Posterior vena cava (tissue), 2 donors: ENCODE measurements at regions of chrX and their contacts with region 1.

Region 1: DNA sequence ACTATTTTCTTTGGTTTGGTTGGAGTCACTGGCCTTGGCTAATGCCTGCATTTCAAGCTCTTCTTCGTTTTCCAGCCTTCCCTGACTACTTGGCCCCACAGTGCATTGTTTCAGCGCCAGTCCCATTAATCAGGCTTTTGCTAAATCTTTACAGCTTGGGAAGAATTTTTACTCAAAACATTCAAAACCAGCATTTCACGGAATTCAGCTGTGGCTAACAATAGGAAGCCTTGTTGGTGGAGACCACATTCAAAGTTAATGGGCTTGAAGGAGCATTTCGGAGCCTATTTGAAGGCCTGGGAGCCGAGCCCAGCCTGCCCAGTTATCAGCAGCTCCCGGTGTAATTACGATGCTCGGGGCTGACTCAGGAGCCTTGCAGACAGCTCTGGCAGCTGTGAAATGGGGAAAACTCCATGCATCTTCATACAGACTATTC is 30.8 kb upstream of the VCX2 start:
- DNase-seq: peak; percentile 81

Region 2: DNA sequence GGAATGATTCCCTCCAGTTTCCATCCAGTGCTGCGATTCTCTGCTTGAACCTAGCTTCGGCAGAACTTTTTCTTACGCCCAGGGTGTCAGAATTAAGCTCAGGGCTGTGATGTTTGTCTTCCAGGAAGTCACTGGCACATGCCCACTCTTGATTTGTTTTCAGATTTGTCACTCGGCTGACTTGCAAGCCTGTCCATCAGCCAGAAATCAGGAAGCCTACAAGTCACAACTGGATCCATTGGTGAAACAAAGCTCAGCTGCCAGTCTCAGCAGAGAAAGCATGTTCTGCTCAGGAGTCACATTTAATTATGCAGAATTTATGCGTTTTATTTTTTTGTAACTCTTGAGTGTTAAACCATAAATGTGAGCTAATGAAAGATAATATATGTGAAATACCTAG is 236.5 kb before region 1 on chrX:
- intact Hi-C with region 1: no loop called
- DNase-seq: no peak

Region 3: GRCh38 chrX:10014462-10015356 is 1812.8 kb after region 1 on chrX:
- intact Hi-C with region 1: loop called in 1 of 2 experiments (anchors 10 kb)
- DNase-seq: peak; percentile 96